Psoas muscle (tissue), 8 donors: ENCODE measurements at regions of chr1 and their contacts with region 1.

Region 1: DNA sequence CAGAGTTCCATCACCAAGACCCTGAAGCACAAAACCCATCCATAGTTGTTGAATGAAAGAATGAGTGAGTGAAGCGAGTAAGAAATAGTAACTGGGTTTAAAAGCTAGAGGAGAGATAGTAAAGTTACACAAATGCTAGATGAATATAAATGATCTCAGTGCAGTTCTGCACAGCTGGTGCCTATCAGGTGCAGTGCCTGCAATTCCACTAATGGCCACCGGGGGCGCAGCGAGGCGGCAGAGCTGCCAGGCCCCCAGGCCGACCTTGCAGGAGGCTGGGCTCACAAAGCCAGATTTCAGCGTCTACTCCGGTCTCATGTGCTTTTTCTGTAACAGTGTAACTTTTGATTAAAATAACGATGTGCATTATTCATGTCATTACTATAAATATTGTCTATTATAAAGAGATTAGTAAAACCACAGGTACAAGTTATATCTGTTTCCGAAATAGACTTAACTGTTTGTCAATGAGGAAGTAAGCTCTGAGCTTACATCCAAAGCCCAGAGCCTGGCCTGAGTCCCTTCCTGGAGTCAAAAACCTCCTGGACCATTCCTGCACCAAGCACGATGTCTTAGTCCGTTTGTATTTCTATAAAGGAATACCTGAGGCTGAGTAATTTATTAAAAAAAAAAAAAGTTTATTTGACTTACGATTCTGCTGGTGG is 477.6 kb downstream of the NPHP4 start:
- DNase-seq: peak; percentile 59 to 76
- ATAC-seq: peak in 2 of 4 donors; percentile 56 to 70
- H3K4me3 ChIP-seq: no peak overlapping the region
- H3K27ac ChIP-seq: no peak overlapping the region
- H3K4me1 ChIP-seq: no peaks in the 10 kb centered on the region
- H3K27me3 ChIP-seq: peaks cover 0 to 8% (median 6%) of the 10 kb centered on the region in 3 donors
- CTCF ChIP-seq: peak; percentile 100

Region 2: GRCh38 chr1:5351366-5351765 is 163.3 kb before region 1 on chr1:
- intact Hi-C with region 1: no loop called
- DNase-seq: no peak
- ATAC-seq: no peak
- H3K4me3 ChIP-seq: no peak overlapping the region
- H3K27ac ChIP-seq: no peak overlapping the region
- H3K4me1 ChIP-seq: no peaks in the 10 kb centered on the region
- H3K27me3 ChIP-seq: peaks cover 0 to 2% (median 0%) of the 10 kb centered on the region in 3 donors
- CTCF ChIP-seq: no peak

Region 3: DNA sequence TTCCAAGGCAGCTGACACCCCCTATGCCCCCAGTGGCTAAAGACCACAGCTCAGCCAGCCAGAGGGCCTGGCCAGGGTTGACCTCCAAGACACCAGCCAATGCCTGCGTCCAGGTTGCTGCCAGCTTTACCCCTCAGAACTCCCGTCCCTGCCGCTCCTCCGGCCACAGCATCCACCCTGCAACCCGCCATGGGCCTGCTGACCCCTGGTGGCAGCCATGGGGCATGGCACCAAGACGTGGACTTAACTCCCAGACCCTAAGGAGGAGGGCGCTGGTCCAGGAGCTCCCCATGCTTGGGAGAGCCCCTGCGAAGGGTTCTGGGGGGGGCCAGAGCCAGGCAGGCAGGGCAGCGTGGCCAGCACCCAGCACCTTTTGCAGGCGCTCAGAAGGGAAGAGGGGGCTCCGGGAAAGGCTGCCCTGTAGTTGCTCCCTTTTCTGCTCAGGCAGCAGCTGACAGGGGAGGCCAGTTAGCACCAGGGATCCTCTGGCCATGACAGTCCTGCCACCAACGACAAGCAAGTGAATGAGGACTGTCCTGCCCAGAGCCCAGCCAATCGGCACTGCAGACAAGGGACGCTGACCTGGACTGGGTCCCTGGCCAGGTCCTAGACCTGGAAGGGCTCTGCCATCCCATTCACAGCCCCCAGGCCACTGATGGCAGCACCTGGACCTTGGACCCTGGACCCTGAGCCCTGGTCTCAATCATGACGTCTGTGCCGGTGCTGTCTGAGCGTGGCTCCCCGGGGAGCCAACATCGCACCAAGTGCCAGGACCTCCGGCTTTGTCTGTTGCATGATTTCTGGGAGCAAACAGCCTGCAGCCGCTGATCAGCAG is 231.3 kb after region 1 on chr1:
- intact Hi-C with region 1: loop called (anchors 5 to 10 kb)
- DNase-seq: peak; percentile 62 to 70
- ATAC-seq: peak; percentile 53 to 78 (median 64)
- H3K4me3 ChIP-seq: no peak overlapping the region
- H3K27ac ChIP-seq: no peak overlapping the region
- H3K4me1 ChIP-seq: no peaks in the 10 kb centered on the region
- H3K27me3 ChIP-seq: peaks cover 0 to 36% (median 9%) of the 10 kb centered on the region in 3 donors
- CTCF ChIP-seq: peak; percentile 76

Region 4: DNA sequence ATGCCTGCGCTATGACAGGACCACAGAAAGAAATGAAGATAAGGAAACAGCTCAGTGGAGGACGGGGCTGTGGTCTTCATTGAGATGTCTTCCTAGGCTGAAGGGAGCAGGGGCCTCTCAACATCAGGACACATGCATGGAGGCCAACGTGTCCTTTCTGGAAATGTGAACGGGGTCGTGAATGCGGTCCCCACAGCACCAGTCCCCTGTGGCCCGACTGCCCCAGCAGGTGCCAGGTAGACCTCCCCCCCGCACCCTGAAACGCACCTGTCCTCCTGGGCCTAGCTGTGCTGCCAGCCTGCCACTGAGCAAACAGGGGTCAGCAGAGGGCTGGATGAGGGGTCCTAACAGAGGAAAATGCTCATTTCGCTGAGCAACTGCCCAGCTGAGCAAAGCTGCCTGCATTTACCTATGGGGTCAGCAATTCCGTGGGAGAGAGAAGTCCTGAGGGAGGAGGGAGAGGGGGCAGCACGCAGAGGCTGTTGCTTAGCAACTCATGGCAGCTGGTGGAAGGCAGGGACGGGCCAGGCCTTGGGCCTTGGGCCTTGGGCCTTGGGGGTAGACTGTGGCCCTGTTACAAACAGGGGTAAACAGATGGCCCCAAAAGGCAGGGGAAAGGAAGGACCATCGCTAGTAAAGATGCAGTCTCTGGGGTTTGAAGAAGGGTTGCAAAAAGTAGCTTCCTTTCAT is 400.2 kb after region 1 on chr1:
- intact Hi-C with region 1: loop called in 1 of 2 experiments (anchors 1 kb)
- DNase-seq: no peak
- ATAC-seq: no peak
- H3K4me3 ChIP-seq: no peak overlapping the region
- H3K27ac ChIP-seq: no peak overlapping the region
- H3K4me1 ChIP-seq: no peaks in the 10 kb centered on the region
- H3K27me3 ChIP-seq: no peaks in the 10 kb centered on the region
- CTCF ChIP-seq: no peak

Region 5: DNA sequence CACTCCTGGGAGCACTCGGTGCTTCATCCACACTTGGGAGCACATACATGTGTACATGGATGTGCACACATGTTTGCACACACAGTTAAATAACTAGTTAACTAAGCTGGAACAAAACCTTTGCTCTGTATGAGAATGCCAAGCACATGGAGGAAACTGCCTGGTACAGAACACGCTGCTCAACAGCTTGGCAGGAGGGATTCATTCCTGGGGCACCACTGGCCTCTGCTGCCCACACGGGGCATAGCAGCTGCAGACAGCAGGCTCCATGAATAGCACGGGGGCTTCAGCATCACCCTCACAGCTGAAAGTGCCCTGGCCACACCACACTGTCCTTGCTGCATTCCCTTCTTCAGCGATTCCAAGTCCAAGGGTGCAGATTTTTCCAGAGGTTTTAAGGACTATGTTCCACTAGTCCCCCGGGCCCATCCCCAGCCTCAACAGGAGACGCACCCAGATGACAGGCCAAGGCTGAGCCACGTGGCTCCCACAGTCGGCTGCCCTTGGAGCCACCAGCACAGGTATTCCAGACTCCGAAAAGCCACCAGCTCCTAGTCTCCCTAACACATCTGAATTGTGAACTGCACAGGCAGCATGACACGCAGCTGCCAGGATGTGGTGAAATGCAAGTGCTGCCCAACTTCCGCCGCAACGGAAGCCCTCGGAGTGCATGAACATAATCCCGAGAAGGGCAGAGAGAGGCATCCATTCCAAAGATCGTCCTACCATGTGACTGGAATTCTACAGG is 460.7 kb after region 1 on chr1:
- intact Hi-C with region 1: loop called (anchors 1 to 5 kb)
- DNase-seq: peak in 1 of 2 donors; percentile 63
- ATAC-seq: peak; percentile 80 to 88 (median 82)
- H3K4me3 ChIP-seq: no peak overlapping the region
- H3K27ac ChIP-seq: no peak overlapping the region
- H3K4me1 ChIP-seq: no peaks in the 10 kb centered on the region
- H3K27me3 ChIP-seq: no peaks in the 10 kb centered on the region
- CTCF ChIP-seq: peak; percentile 51